Caco-2 (cell line): ENCODE measurements at regions of chr13 and their contacts with region 1.

Region 1: GRCh38 chr13:75792526-75793187 is 156.5 kb downstream of the LMO7 start:
- DNase-seq: peak; percentile 85 to 89
- H3K4me3 ChIP-seq: no peak overlapping the region
- H3K4me3 Mint-ChIP-seq: peak overlapping the region; percentile 45
- H3K27ac Mint-ChIP-seq: peak overlapping the region; percentile 97
- H3K4me1 ChIP-seq: peaks cover 71% of the 10 kb centered on the region
- H3K4me1 Mint-ChIP-seq: peaks cover 43% of the 10 kb centered on the region
- H3K27me3 ChIP-seq: no peaks in the 10 kb centered on the region
- H3K27me3 Mint-ChIP-seq: no peaks in the 10 kb centered on the region
- CTCF ChIP-seq: no peak

Region 2: GRCh38 chr13:75694722-75695121 is 97.9 kb before region 1 on chr13:
- CTCF ChIA-PET with region 1: interaction called, 26 read pairs
- POLR2A ChIA-PET with region 1: interaction called, 3 read pairs
- intact Hi-C with region 1: loop called (anchors 2 kb)
- DNase-seq: no peak
- H3K4me3 ChIP-seq: no peak overlapping the region
- H3K4me3 Mint-ChIP-seq: peak overlapping the region; percentile 2
- H3K27ac Mint-ChIP-seq: no peak overlapping the region
- H3K4me1 ChIP-seq: peaks cover 21% of the 10 kb centered on the region
- H3K4me1 Mint-ChIP-seq: peaks cover 21% of the 10 kb centered on the region
- H3K27me3 ChIP-seq: no peaks in the 10 kb centered on the region
- H3K27me3 Mint-ChIP-seq: no peaks in the 10 kb centered on the region
- CTCF ChIP-seq: no peak

Region 3: GRCh38 chr13:75724752-75725504 is 67.7 kb before region 1 on chr13:
- CTCF ChIA-PET with region 1: no interaction called
- POLR2A ChIA-PET with region 1: no interaction called
- intact Hi-C with region 1: loop called (anchors 2 kb)
- DNase-seq: no peak
- H3K4me3 ChIP-seq: no peak overlapping the region
- H3K4me3 Mint-ChIP-seq: no peak overlapping the region
- H3K27ac Mint-ChIP-seq: peak overlapping the region; percentile 6
- H3K4me1 ChIP-seq: peaks cover 40% of the 10 kb centered on the region
- H3K4me1 Mint-ChIP-seq: peaks cover 26% of the 10 kb centered on the region
- H3K27me3 ChIP-seq: no peaks in the 10 kb centered on the region
- H3K27me3 Mint-ChIP-seq: no peaks in the 10 kb centered on the region
- CTCF ChIP-seq: no peak

Region 4: GRCh38 chr13:75749407-75749806 is 43.2 kb before region 1 on chr13:
- CTCF ChIA-PET with region 1: no interaction called
- POLR2A ChIA-PET with region 1: no interaction called
- intact Hi-C with region 1: no loop called
- DNase-seq: no peak
- H3K4me3 ChIP-seq: no peak overlapping the region
- H3K4me3 Mint-ChIP-seq: no peak overlapping the region
- H3K27ac Mint-ChIP-seq: no peak overlapping the region
- H3K4me1 ChIP-seq: peaks cover 11% of the 10 kb centered on the region; the same call in 1 of the 2 replicates
- H3K4me1 Mint-ChIP-seq: peaks cover 28% of the 10 kb centered on the region
- H3K27me3 ChIP-seq: no peaks in the 10 kb centered on the region
- H3K27me3 Mint-ChIP-seq: no peaks in the 10 kb centered on the region
- CTCF ChIP-seq: no peak

Region 5: DNA sequence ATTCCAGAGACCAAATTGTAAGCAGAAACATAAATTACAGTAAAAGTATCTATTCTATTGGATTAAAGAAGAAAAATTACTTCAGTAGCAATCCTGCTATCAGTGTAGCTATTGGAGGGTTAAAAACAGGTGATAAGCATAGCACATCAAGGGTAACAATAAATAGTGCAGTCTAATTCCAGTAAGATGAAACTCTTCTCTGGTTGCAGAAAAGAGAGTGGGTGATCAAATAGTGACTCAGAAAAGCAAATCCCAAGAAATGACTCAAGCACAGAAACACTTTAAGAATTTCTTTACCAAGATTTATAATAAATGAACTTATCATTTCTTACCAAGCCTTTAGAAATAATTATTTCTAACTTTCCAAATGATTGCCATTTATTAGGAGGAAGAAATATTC is 20.8 kb before region 1 on chr13:
- CTCF ChIA-PET with region 1: interaction called, 3 read pairs
- POLR2A ChIA-PET with region 1: interaction called, 5 read pairs
- intact Hi-C with region 1: loop called (anchors 1 kb)
- DNase-seq: no peak
- H3K4me3 ChIP-seq: no peak overlapping the region
- H3K4me3 Mint-ChIP-seq: peak overlapping the region; percentile 25
- H3K27ac Mint-ChIP-seq: peak overlapping the region; percentile 13
- H3K4me1 ChIP-seq: peaks cover 76% of the 10 kb centered on the region
- H3K4me1 Mint-ChIP-seq: peaks cover 44% of the 10 kb centered on the region
- H3K27me3 ChIP-seq: no peaks in the 10 kb centered on the region
- H3K27me3 Mint-ChIP-seq: no peaks in the 10 kb centered on the region
- CTCF ChIP-seq: no peak

Region 6: GRCh38 chr13:75850916-75851315 is 58.3 kb after region 1 on chr13:
- CTCF ChIA-PET with region 1: no interaction called
- POLR2A ChIA-PET with region 1: no interaction called
- intact Hi-C with region 1: no loop called
- DNase-seq: peak in 1 of 2 experiments; percentile 55
- H3K4me3 ChIP-seq: no peak overlapping the region
- H3K4me3 Mint-ChIP-seq: no peak overlapping the region
- H3K27ac Mint-ChIP-seq: no peak overlapping the region
- H3K4me1 ChIP-seq: no peaks in the 10 kb centered on the region
- H3K4me1 Mint-ChIP-seq: peaks cover 7% of the 10 kb centered on the region
- H3K27me3 ChIP-seq: no peaks in the 10 kb centered on the region
- H3K27me3 Mint-ChIP-seq: no peaks in the 10 kb centered on the region
- CTCF ChIP-seq: no peak